Dendritic cell treated with granulocyte-macrophage colony-stimulating factor and Interleukin-4, amounts not matched to agents 40 ng/mL and 50 ng/mL, for 4 days (primary cell): ENCODE measurements at regions of chr1 and their contacts with region 1.

Region 1: DNA sequence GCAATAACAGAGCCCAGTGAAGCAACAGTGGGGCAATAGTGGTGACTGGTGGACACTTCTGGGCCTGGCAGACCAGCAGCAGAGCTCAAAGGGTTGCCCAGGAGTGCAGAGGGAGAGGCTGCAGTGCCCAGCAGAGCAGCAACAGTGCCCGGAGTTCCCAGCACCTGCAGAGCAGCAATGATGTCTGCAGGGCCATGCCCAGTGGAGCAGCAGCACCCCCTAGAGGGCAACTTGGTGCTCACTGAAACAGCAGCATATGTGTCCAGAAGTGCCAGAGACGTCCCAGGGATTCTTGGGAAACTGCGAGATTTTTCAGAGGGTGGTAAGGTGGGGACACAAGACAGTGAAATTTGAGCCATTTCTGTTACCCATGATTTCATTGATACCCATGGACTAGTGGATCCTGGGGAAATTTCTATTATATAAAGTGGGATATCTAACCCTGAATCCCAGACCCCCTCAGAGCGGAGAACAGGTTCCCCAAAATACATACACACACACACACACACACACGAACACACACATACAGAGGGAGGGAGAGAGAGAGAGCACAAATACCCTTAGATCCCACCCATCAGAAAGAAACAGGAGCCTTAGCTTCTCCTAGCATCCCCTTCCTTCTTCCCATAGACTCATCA is 156.9 kb upstream of the GJB5 start:
- H3K4me3 Mint-ChIP-seq: no peak overlapping the region
- H3K27ac Mint-ChIP-seq: no peak overlapping the region
- H3K4me1 Mint-ChIP-seq: no peaks in the 10 kb centered on the region
- H3K27me3 Mint-ChIP-seq: peaks cover 1% of the 10 kb centered on the region

Region 2: DNA sequence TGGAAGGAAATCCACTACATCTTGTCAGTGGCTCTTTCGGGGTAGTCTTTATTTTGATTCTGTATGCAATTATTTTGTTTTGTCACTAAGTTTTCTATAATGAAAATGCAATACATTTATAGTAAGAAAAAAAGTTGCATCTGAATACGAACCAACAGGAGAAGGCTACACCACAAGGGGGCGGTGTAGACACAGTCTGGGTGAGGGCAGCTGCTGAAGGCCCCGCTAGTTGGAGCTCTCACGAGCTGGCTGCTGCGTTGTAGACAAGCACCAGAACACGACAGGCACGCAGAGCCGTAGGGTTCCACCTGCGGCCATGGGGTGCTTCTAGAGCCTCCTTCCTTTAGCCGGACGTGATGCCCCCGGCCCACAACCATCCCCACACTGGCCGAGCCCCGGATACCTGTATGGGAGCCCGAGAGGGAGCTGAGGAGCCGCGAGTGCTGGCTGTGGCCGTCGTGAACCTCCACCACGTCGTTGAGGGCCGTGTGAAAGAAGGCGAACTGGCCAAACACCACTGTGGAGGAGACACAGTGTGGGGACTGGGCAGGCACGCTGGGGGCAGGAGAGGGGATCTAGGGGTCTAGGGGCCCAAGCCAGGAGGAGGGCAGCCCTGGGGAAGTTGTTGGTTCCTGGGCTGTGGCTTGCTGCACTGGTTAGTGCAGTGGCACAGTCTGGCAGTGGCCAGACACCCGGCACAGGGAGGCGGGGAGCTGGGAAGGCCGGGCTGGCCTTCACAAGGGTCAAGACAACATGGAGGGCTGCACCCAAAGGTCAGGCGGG is 964.8 kb before region 1 on chr1:
- intact Hi-C with region 1: loop called (anchors 2 kb)
- H3K4me3 Mint-ChIP-seq: no peak overlapping the region
- H3K27ac Mint-ChIP-seq: no peak overlapping the region
- H3K4me1 Mint-ChIP-seq: no peaks in the 10 kb centered on the region
- H3K27me3 Mint-ChIP-seq: peaks cover 28% of the 10 kb centered on the region

Region 3: DNA sequence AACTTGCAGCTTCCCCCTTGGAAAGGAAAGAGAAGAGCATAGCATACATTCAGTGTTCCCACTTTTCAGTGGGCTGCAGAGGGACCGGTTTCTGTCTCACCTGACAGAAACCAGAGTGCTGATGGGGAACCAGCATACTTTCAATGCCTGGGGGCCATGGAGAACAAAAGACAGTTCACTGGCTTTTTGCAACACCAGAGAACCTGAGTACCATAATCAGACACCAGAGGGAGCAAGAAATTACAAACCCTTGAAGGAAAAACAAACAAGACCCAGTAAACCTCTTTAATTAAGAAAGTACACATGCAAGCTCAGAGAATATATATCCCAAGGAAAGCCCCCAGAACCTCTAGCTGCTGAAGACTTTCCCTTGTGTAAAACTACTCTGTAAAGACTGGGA is 484.1 kb before region 1 on chr1:
- intact Hi-C with region 1: loop called (anchors 10 kb)
- H3K4me3 Mint-ChIP-seq: no peak overlapping the region
- H3K27ac Mint-ChIP-seq: no peak overlapping the region
- H3K4me1 Mint-ChIP-seq: no peaks in the 10 kb centered on the region
- H3K27me3 Mint-ChIP-seq: no peaks in the 10 kb centered on the region

Region 4: DNA sequence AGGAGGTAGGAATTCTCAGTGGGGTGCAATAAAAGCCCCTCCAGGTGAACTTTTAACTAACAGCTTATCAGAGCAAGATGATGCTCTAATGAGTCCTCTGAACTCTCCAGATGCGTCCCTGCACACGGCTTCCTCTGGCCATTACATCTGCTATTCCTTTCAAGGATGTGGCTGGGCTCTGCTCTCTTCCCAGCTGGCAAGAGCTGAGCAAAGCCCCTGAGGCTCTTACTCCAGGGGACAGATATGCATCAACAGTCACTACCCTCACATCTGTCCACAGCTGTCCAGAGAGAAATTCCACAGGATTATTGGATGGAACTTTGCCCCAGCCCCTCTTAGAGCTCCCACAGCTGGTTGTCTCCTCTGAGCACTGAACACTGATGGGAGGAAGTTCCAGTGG is 153.5 kb before region 1 on chr1:
- intact Hi-C with region 1: no loop called
- H3K4me3 Mint-ChIP-seq: no peak overlapping the region
- H3K27ac Mint-ChIP-seq: no peak overlapping the region
- H3K4me1 Mint-ChIP-seq: no peaks in the 10 kb centered on the region
- H3K27me3 Mint-ChIP-seq: peaks cover 2% of the 10 kb centered on the region

Region 5: DNA sequence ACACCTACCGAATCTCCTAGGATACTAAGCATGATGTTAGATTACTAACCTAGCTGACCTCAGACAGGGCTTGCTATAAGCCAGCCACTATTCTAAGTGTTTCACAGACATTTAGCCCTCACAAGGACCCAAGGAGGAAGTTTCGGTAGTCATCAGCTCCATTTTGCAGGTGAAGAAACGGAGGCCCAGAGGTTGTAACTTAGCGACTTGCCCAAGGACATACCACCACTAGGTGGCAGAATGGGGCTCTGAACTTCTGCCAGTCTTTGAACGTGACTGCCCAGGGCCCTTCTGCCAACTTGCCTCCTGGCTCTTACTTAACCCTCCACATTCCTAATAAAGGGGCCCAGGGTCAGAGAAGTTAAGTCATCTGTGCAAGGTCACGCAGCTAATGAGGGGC is 137.8 kb before region 1 on chr1:
- intact Hi-C with region 1: loop called (anchors 2 kb)
- H3K4me3 Mint-ChIP-seq: no peak overlapping the region
- H3K27ac Mint-ChIP-seq: no peak overlapping the region
- H3K4me1 Mint-ChIP-seq: no peaks in the 10 kb centered on the region
- H3K27me3 Mint-ChIP-seq: peaks cover 2% of the 10 kb centered on the region